Heart right ventricle (tissue), 16 donors: ENCODE measurements at regions of chr10 and their contacts with region 1.

Region 1: DNA sequence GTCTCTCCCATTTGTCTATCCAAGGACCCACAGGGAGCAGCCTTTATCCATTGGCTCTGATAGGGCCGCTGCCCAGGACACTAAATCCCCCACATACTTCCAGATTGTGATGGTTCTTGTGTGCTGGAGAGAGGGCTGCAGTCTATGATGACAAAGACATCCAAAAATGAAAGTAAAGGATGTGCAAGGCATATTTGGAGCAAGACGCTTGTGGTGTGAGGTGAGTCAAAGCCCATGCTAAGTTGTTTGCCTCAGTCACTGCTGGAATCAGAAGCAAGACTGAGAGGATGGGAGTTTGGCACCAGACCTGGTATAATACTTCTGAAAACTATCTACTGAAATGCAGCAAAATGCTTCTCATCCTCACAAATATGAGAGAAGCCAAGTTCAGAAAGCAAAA is 22.7 kb downstream of the ZNF22 start:
- DNase-seq: no peak
- ATAC-seq: no peak
- H3K4me3 ChIP-seq: no peak overlapping the region
- H3K27ac ChIP-seq: no peak overlapping the region
- H3K4me1 ChIP-seq: no peaks in the 10 kb centered on the region
- H3K27me3 ChIP-seq: no peaks in the 10 kb centered on the region
- CTCF ChIP-seq: no peak

Region 2: DNA sequence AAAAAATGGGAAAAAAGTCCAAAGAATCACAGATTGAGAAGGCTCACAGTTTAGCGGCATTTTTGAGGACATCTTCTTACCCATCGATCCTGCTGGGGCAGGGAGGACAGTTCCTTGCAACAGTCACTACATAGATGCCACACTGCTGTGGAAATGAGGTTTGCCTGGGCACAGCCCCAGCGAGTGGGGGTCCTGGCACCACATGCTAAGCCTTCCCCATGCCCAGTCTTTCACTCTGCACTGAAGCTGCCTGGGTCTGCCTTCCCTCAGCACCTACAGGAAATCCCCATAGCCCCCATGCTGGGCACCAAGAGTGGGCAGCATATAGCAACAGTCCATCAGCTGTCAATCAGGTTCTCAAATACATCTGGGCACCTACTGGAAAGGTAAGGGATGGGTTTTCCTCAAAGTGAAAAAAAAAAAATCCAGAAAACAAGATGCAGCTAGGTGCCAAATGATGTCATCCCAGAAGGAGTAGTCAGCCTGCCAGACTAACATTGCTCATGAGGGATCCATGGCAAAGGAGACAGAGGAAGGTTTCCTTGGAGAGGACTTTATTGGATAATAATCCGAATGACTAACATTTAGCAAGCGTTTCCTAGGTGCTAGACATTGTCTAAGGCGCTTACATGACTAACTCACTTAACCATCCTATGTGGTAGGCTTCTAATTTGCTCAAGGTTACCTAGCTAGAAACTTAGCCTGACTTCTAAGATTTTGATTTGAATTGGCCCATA is 512.9 kb before region 1 on chr10:
- intact Hi-C with region 1: no loop called
- DNase-seq: no peak
- ATAC-seq: peak in 1 of 8 donors; percentile 23
- H3K4me3 ChIP-seq: no peak overlapping the region
- H3K27ac ChIP-seq: no peak overlapping the region
- H3K4me1 ChIP-seq: peaks cover 0 to 10% (median 0%) of the 10 kb centered on the region in 9 donors
- H3K27me3 ChIP-seq: peaks cover 0 to 5% (median 0%) of the 10 kb centered on the region in 7 donors
- CTCF ChIP-seq: no peak

Region 3: GRCh38 chr10:45052700-45053099 is 29.3 kb after region 1 on chr10:
- intact Hi-C with region 1: loop called in 1 of 10 experiments (anchors 1 kb)
- DNase-seq: no peak
- ATAC-seq: no peak
- H3K4me3 ChIP-seq: no peak overlapping the region
- H3K27ac ChIP-seq: no peak overlapping the region
- H3K4me1 ChIP-seq: no peaks in the 10 kb centered on the region
- H3K27me3 ChIP-seq: no peaks in the 10 kb centered on the region
- CTCF ChIP-seq: no peak

Region 4: DNA sequence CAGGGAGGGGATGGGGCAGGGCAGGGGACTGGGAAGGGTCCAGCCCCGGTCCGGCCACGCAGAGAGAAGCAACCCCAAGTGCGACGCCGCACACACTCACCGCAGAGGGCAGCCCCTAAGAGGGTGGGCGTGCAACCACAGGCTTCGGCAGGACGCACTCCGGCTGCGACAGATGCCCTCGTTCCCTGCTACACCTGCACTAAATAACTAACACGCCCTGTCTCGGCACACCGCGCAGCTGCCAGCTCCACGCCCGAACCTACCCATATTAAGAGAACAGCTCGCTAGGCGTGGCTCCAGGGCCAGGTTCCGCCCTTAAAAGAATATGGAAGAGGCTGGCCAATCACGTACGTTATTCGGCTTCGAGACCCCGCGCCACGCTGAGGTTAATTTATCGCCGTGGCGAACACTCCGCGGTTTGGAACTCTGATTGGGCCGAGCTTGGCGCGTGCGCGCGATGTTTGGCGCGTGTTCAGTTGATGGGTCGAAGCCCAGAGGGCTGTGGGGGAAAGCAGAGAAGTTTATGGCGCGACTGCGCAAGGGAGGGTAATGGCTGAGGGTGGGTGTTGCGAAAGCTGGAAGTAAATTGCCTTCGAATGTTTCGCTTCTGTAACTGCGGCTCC is 200.9 kb after region 1 on chr10:
- intact Hi-C with region 1: loop called in 3 of 10 experiments (anchors 10 kb)
- DNase-seq: no peak
- ATAC-seq: peak in 2 of 8 donors; percentile 34 to 44
- H3K4me3 ChIP-seq: no peak overlapping the region
- H3K27ac ChIP-seq: no peak overlapping the region
- H3K4me1 ChIP-seq: no peaks in the 10 kb centered on the region
- H3K27me3 ChIP-seq: peaks cover 0 to 47% (median 9%) of the 10 kb centered on the region in 7 donors
- CTCF ChIP-seq: no peak